ENCODE measurements at regions of chr6 and their contacts with region 1.

Region 1: DNA sequence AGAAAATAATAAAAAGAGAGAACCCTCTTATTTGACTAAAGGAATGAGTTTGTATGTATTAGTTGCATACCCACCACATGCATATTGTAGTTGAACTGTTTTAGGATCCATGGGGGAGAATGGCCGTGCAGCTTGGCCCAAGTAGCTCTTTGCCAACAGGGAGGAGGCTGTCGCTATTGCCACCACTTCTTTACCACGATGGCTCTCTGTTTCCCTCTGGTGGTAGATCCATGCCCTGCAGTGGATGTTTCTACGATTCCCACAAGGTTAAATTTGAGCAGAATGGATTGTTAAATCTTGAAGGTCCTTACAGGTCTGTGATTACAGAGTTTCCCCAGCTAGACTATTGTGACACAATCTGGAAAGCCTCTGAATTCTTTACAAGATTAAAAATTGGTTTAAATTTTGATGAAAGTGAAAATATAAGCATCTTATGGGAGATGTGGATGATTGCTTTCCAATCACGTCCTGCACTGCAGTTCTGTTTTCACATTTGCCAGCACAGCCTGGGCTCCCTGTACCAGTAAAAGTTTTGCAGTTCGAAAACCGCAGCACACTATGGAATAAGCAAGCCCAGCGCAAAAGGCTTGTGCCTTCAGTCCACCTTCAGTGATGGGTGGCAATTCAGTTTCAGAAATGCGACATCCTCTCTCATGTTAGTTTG is 34.4 kb upstream of the FNDC1 start:
- DNase-seq: peak; percentile 65 to 82 (median 79)
- H3K4me3 ChIP-seq: no peak overlapping the region
- H3K4me3 Mint-ChIP-seq: no peak overlapping the region
- H3K27ac ChIP-seq: no peak overlapping the region
- H3K27ac Mint-ChIP-seq: peak overlapping the region in 1 of 7 donors; percentile 46
- H3K4me1 ChIP-seq: peaks cover 3 to 4% of the 10 kb centered on the region in 2 donors
- H3K4me1 Mint-ChIP-seq: peaks cover 9% of the 10 kb centered on the region
- H3K27me3 ChIP-seq: peaks cover 0 to 2% of the 10 kb centered on the region in 2 donors
- H3K27me3 Mint-ChIP-seq: peaks cover 5 to 11% (median 7%) of the 10 kb centered on the region in 3 donors
- CTCF ChIP-seq: peak; percentile 96

Region 2: DNA sequence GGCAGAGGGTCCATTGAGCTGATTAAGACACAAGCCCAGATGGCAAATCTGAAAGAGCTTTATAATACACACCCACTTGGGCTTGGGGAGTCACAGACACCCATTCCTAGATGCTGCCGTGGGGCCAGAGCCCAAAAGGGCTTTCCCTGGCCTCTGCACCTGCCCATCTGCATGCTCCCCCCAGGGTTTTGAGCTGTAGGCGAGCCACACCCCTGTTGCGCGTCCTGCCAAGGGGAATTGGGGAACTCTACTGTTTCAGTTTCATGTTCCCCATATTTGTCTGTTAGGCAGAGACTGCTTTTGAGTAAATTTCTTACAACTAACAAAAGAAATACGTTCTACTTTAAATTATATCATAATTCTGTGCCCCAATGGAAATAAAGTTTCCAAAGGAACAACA is 18.5 kb before region 1 on chr6:
- intact Hi-C with region 1: loop called in 1 of 2 experiments (anchors 2 kb)
- DNase-seq: peak; percentile 81 to 88 (median 86)
- H3K4me3 ChIP-seq: peak overlapping the region in 1 of 3 experiments; percentile 46
- H3K4me3 Mint-ChIP-seq: peak overlapping the region in 1 of 2 donors; percentile 39
- H3K27ac ChIP-seq: peak overlapping the region; percentile 97 to 99
- H3K27ac Mint-ChIP-seq: peak overlapping the region; percentile 99 to 100 (median 100)
- H3K4me1 ChIP-seq: peaks cover 86 to 87% of the 10 kb centered on the region in 2 donors
- H3K4me1 Mint-ChIP-seq: peaks cover 84% of the 10 kb centered on the region
- H3K27me3 ChIP-seq: no peaks in the 10 kb centered on the region
- H3K27me3 Mint-ChIP-seq: peaks cover 0 to 4% (median 0%) of the 10 kb centered on the region in 3 donors
- CTCF ChIP-seq: no peak